ENCODE measurements at regions of chr19 and their contacts with region 1.

Region 1: GRCh38 chr19:33406521-33407139 is 33.1 kb downstream of the CEBPG start:
- DNase-seq: peak; percentile 83 to 93
- ATAC-seq: peak; percentile 76
- H3K4me3 ChIP-seq: no peak overlapping the region
- H3K27ac ChIP-seq: no peak overlapping the region
- H3K4me1 ChIP-seq: no peaks in the 10 kb centered on the region
- H3K27me3 ChIP-seq: no peaks in the 10 kb centered on the region

Region 2: GRCh38 chr19:33143897-33144405 is 262.7 kb before region 1 on chr19:
- intact Hi-C with region 1: loop called in 1 of 2 experiments (anchors 5 kb)
- DNase-seq: peak; percentile 65 to 84
- ATAC-seq: peak; percentile 94
- H3K4me3 ChIP-seq: no peak overlapping the region
- H3K27ac ChIP-seq: no peak overlapping the region
- H3K4me1 ChIP-seq: no peaks in the 10 kb centered on the region
- H3K27me3 ChIP-seq: no peaks in the 10 kb centered on the region

Region 3: DNA sequence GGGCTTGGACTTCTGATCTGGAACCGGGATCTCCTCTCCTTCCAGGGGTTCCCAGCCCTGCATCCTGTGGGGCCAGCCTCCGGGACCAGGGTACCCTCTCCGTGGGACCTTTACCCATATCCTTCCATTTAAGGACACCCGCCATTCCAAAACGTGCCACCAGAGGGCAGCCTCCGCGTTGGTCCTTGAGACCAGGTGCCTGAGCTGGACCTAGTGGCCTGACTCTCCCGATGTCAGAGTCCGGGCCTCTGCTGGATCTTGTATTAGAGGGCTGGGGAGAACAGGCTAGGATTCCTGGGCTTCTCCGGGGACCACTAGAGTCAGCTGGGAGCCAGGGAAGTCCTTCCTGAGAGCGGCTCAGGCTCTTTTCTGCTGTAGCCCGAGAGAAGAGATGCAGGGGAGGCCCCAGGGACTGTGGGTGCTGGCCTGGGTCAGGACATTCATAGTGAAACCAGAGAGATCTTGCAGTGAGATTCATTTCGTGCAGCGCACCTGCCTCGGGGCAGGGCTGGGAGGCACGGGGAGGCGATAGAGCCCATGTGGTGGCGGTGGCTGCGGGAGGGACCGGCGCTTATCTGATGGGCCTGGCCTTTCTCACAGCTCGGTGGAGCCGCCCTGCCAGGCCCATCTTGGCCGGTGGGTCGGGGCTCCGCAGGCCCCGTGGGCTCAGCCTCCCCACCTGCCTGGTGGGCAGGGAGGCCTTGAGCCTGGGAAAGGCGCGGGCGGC is 171.2 kb before region 1 on chr19:
- intact Hi-C with region 1: loop called (anchors 2 kb)
- DNase-seq: peak; percentile 83 to 93
- ATAC-seq: peak; percentile 70
- H3K4me3 ChIP-seq: no peak overlapping the region
- H3K27ac ChIP-seq: no peak overlapping the region
- H3K4me1 ChIP-seq: no peaks in the 10 kb centered on the region
- H3K27me3 ChIP-seq: no peaks in the 10 kb centered on the region

Region 4: GRCh38 chr19:33302175-33302973 is 104.3 kb before region 1 on chr19 and contains the start of gene CEBPA:
- intact Hi-C with region 1: loop called in 1 of 2 experiments (anchors 5 kb)
- DNase-seq: peak; percentile 89 to 92
- ATAC-seq: peak; percentile 90
- H3K4me3 ChIP-seq: peak within 1 kb of the TSS; percentile 30 to 80
- H3K27ac ChIP-seq: no peak within 1 kb of the TSS
- H3K4me1 ChIP-seq: no peaks in the 10 kb centered on the region
- H3K27me3 ChIP-seq: no peaks in the 10 kb centered on the region
- total RNA-seq, gene CEBPA: 6.1 to 10.3 TPM

Region 5: DNA sequence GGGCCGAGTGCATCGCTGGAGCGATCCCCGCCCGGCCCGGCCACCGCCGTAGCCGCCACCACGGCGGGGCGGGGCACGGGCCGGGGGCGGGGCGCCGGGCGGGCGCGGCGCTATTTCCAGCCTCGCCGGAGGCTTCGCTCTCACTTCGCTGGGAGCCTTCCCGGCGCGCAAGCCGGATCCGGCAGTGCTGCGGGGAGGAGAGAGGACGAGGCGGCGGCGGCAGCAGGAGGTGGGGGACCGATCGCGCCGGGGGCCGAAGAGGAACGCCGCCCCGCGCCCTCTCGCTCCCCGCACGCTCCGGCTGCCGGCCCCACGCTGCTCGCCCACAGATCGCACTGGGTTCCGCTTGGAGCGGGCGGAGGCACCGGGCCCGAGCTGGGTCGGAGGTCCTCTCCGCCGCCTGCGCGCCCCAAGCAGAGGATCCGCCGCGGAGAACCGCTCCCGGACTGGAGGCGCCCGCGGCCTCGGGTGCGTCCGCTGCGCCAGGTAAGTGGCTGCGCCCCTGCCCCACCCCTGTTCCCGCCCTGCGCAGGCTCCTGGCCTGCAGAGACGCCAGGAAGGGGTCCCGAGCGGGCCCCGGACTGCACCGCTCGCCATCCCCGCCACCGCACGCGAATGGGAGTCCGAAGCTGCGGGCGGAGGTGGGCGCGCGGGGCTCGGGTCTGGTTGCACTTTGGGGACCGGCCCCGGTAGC is 215.3 kb after region 1 on chr19 and contains the start of gene CHST8:
- intact Hi-C with region 1: no loop called
- DNase-seq: peak in 1 of 2 donors; percentile 73
- ATAC-seq: peak; percentile 21
- H3K4me3 ChIP-seq: peak within 1 kb of the TSS in 1 of 2 donors; percentile 22
- H3K27ac ChIP-seq: no peak within 1 kb of the TSS
- H3K4me1 ChIP-seq: no peaks in the 10 kb centered on the region
- H3K27me3 ChIP-seq: no peaks in the 10 kb centered on the region
- total RNA-seq, gene CHST8: 0.96 to 1.4 TPM

Measured in aorta (tissue), 5 donors.